ENCODE measurements at regions of chr1 and their contacts with region 1.

Region 1: DNA sequence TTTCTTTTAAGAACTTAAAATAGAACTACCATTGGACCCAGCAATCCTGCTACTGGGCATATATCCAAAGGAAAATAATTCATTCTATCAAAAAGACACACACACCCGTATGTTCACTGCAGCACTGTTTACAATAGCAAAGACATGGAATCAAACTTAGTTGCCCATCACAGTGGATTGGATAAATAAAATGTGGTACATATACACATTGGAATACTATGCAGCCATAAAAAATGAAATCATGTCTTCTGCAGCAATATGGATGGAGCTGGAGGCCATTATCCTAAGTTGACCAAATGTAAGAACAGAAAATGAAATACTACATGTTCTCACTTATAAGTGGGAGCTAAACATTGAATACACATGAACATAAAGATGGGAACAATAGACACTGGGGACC is 585.3 kb upstream of the USP24 start:
- DNase-seq: no peak

Region 2: DNA sequence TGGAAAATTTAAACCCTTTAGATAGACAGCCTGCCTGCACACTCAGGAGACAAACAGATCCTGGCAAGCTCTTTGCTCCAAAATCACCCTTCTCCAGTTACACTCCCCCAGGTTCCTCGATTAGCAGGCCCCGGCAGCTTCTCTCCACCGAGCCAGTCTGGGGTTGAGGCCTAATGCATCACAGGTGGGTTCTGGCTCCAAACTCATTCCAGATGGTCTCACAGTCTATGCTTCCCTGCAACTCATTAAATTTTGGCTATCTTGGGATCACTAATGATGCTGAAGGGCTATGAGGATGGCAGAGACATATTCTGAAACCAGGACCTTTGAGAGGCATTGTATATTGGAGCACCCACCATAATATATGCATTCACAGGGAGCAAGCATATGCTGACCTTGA is 25.5 kb before region 1 on chr1:
- intact Hi-C with region 1: no loop called
- DNase-seq: no peak

Region 3: DNA sequence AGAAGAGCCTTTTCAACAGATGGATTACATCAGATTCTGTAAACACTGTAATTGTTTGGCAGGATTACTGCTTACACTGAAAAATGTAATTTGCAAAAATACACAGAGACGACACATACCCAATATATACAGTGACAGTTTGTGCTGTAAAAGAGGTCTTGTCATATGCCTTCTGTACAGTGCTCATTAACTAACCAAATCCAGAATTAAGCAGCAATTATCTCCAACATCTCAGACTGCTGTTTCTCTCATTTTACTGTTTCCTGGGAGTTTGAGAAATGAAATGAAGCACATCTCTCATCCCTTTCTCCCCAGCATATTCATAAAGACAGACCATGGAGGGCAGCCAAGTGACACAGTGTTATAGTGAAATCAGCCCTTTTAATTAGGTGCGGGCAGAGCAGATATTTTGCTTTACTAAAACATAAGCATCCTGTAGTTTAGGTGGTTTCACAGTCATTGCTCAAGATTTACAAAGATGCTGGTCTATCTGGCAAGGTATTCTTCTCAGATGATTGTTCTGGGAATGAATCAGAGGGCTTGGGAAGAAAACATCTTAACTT is 33.1 kb after region 1 on chr1:
- intact Hi-C with region 1: no loop called
- DNase-seq: no peak

Region 4: DNA sequence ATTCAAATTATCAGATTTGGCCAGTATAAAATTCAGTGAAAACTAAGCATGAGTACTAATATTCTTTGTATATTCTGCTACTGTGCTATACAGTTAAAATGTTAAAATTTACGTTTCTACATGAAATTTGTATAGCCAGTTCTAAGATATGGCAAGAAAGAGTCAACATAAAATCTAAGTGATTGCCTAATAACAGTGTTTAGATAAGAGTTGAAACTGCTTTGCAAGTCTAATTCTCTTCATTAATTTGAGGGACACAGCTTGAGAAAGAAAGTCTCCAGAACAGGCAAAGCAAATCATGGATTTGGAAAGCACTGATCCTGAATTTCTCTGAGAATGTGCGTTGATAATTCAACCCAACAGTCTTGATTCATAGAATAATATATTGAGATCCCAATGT is 45.5 kb after region 1 on chr1:
- intact Hi-C with region 1: loop called in 1 of 2 experiments (anchors 1 kb)
- DNase-seq: no peak

Region 5: GRCh38 chr1:56169856-56170255 is 369.4 kb after region 1 on chr1:
- intact Hi-C with region 1: no loop called
- DNase-seq: no peak

Measured in posterior vena cava (tissue), 2 donors.